Activated CD4-positive, alpha-beta T cell treated with anti-CD3 and anti-CD28 coated beads, Interleukin-2, amount 10 ng/mL, durations not matched to agents 7 days and 5 days (primary cell): ENCODE measurements at regions of chr6 and their contacts with region 1.

Region 1: DNA sequence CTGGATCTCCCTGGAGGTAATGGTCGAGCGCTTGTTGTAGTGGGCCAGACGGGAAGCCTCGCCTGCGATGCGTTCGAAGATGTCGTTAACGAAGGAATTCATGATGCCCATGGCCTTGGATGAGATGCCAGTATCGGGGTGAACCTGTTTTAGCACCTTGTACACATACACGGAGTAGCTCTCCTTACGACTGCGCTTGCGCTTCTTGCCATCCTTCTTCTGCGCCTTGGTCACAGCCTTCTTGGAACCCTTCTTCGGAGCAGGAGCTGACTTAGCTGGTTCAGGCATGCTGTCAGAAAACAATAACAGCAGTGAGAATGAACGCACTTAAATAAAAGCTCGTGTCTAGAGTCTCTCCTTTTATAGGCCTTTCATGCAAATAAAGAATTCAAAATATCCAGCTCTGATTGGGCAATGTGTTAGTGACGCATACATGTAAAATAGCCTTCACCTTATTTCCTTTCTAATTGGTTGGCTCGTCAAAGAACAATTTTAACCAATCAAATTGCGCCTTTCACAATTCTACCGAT is 129.2 kb downstream of the HFE start:
- DNase-seq: peak; percentile 92
- H3K4me3 Mint-ChIP-seq: no peak overlapping the region
- H3K27ac Mint-ChIP-seq: no peak overlapping the region
- H3K4me1 Mint-ChIP-seq: peaks cover 39% of the 10 kb centered on the region
- H3K27me3 Mint-ChIP-seq: no peaks in the 10 kb centered on the region

Region 2: DNA sequence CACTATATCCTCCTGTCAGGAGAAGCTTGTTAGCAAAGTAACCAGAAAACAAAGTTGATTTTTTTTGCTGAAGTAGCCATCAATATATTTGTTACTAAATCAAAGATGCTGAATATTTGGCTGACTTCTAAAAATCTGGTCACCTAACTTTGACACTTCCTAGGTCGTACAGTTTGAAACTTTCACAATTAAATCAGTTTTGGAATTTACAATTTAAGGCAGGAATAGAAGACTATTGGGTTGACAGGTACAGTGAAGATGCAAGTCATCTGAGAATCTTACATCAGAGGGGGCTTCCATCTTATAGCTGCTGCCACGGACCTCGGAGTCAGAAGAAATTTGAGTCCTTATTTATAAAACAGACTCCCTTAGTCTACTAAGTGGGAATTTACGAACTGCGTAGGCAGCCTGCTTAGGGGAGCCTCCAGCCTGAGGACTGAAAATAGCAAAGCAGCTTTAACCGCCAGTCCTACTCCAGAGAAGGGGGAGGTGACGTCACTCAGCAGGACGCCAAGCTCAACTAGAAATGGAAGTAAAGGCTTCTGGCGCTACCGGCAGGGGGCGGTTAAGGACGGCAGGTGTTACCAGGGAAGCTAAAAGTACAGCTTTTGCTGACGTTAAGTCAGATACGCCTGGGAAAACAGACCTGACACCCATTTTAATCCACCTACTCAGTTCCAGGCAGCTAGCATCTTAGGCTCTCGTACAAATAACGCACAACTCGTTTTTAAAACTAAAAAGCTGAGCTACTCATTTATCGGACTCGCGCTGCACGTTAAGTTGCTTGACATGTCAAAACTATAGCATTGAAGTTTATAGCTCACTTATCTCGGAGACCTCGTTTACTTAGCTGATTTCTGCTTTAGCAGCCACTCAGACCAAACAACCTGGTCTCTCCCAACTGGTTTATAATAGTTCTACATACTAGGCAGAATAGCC is 190.3 kb before region 1 on chr6:
- CTCF ChIA-PET with region 1: interaction called, 6 read pairs
- POLR2A ChIA-PET with region 1: interaction called, 21 read pairs
- DNase-seq: peak; percentile 96
- H3K4me3 Mint-ChIP-seq: peak overlapping the region; percentile 88
- H3K27ac Mint-ChIP-seq: peak overlapping the region; percentile 100
- H3K4me1 Mint-ChIP-seq: peaks cover 86% of the 10 kb centered on the region
- H3K27me3 Mint-ChIP-seq: peaks cover 3% of the 10 kb centered on the region

Region 3: GRCh38 chr6:26156076-26156849 is 60.2 kb before region 1 on chr6:
- CTCF ChIA-PET with region 1: interaction called, 4 read pairs
- POLR2A ChIA-PET with region 1: interaction called, 54 read pairs
- DNase-seq: peak; percentile 90
- H3K4me3 Mint-ChIP-seq: peak overlapping the region; percentile 92
- H3K27ac Mint-ChIP-seq: peak overlapping the region; percentile 97
- H3K4me1 Mint-ChIP-seq: peaks cover 39% of the 10 kb centered on the region
- H3K27me3 Mint-ChIP-seq: peaks cover 3% of the 10 kb centered on the region

Region 4: DNA sequence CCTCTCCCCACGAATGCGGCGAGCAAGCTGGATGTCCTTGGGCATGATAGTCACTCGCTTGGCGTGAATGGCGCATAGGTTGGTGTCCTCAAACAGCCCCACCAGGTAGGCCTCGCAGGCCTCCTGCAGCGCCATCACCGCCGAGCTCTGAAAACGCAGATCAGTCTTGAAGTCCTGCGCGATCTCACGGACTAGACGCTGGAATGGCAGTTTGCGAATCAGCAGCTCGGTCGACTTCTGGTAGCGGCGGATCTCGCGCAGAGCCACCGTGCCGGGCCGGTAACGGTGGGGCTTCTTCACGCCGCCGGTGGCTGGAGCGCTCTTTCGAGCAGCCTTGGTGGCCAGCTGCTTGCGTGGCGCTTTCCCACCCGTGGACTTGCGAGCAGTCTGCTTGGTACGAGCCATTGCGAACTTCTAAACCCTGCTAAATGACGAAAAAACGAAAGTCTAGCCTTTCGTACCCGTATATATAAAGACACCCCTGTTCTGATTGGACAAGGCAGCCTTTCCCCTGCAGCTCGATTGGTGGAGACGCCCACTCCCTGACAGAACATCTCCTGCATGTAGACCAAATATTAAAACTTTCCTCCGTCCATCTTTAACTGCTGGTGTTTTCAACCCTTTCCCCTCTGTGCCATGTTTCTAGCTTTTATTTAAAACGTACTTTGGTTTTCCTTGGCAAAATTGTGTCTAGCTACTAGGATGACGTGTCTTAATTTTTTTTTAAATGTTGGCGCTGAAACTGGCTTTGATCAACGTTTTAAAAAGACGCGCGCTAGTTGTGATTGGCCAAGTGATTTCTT is 19.4 kb before region 1 on chr6:
- CTCF ChIA-PET with region 1: interaction called, 15 read pairs
- POLR2A ChIA-PET with region 1: interaction called, 205 read pairs
- DNase-seq: peak; percentile 91
- H3K4me3 Mint-ChIP-seq: peak overlapping the region; percentile 99
- H3K27ac Mint-ChIP-seq: peak overlapping the region; percentile 98
- H3K4me1 Mint-ChIP-seq: peaks cover 44% of the 10 kb centered on the region
- H3K27me3 Mint-ChIP-seq: no peaks in the 10 kb centered on the region

Region 5: GRCh38 chr6:26249957-26250697 is 33.7 kb after region 1 on chr6:
- CTCF ChIA-PET with region 1: interaction called, 19 read pairs
- POLR2A ChIA-PET with region 1: interaction called, 3 read pairs
- DNase-seq: peak; percentile 82
- H3K4me3 Mint-ChIP-seq: peak overlapping the region; percentile 98
- H3K27ac Mint-ChIP-seq: peak overlapping the region; percentile 100
- H3K4me1 Mint-ChIP-seq: peaks cover 40% of the 10 kb centered on the region
- H3K27me3 Mint-ChIP-seq: no peaks in the 10 kb centered on the region

Region 6: GRCh38 chr6:26431258-26432172 is 215.1 kb after region 1 on chr6:
- CTCF ChIA-PET with region 1: no interaction called
- POLR2A ChIA-PET with region 1: no interaction called
- DNase-seq: no peak
- H3K4me3 Mint-ChIP-seq: no peak overlapping the region
- H3K27ac Mint-ChIP-seq: no peak overlapping the region
- H3K4me1 Mint-ChIP-seq: peaks cover 6% of the 10 kb centered on the region
- H3K27me3 Mint-ChIP-seq: no peaks in the 10 kb centered on the region

Region 7: GRCh38 chr6:27132532-27133280 is 916.3 kb after region 1 on chr6:
- CTCF ChIA-PET with region 1: no interaction called
- POLR2A ChIA-PET with region 1: interaction called, 10 read pairs
- DNase-seq: peak; percentile 94
- H3K4me3 Mint-ChIP-seq: no peak overlapping the region
- H3K27ac Mint-ChIP-seq: no peak overlapping the region
- H3K4me1 Mint-ChIP-seq: peaks cover 66% of the 10 kb centered on the region
- H3K27me3 Mint-ChIP-seq: no peaks in the 10 kb centered on the region